Posterior vena cava (tissue), 2 donors: ENCODE measurements at regions of chr12 and their contacts with region 1.

Region 1: DNA sequence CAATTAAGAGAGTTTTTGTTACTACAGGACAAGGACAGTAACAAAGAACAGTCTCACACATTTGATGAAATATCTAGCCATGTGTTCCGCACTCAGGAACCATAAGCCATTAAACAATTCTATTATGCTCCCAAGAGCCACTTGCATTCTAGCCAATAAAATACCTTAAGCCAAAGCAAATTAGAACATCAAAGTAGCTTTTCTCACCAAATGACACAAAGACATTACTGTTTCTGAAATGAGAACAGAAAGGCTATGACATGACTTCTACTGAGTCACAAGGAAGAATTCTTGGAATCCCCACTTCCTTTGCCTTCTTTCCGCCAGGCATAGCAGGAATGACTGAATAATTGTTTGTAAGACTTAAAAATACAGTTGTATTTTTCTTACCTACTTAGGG is 445.8 kb downstream of the ATP23 start:
- DNase-seq: no peak

Region 2: GRCh38 chr12:58291106-58291505 is 96.1 kb before region 1 on chr12:
- intact Hi-C with region 1: no loop called
- DNase-seq: no peak

Region 3: GRCh38 chr12:58408516-58408915 is 21.3 kb after region 1 on chr12:
- intact Hi-C with region 1: no loop called
- DNase-seq: peak; percentile 72

Region 4: GRCh38 chr12:58547217-58547616 is 160.0 kb after region 1 on chr12:
- intact Hi-C with region 1: no loop called
- DNase-seq: no peak

Region 5: GRCh38 chr12:59164991-59165718 is 778.0 kb after region 1 on chr12:
- intact Hi-C with region 1: loop called in 1 of 2 experiments (anchors 5 kb)
- DNase-seq: no peak